Vagina (tissue), 2 donors: ENCODE measurements at regions of chr7 and their contacts with region 1.

Region 1: DNA sequence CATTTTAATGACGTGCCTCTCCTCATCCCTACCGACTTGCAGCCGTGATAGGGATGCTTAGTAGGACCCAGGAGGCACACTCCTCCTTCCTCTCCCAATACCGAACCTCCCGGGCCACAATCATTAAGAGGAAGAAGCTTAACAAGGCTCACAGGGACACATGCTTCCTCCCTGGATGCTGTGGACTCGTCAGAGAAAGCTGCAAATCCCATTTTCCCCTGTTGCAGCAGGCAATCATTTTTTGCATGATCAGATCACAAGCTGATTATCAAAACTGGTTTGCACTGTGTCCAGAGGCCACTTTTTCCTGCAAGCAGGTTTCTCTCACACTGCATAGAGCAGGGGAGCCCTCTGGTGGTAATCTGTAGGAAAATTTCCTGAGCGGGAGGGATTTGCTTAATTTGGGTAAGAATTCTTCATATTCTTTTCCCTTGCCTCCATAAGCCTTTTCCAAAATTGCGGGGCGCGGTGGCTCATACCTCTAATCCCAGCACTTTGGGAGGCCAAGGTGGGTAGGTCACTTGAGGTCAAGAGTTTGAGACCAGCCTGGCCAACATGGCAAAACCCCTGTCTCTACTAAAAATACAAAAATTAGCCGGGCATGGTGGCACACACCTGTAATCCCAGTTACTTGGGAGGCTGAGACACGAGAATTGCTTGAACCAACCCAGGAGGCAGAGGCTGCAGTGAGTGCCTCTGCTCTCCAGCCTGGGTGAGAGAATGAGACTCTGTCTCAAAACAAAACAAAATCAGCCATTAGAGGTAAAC is 16.1 kb upstream of the LAMB4 start:
- DNase-seq: no peak
- H3K4me3 ChIP-seq: no peak overlapping the region
- H3K27ac ChIP-seq: no peak overlapping the region
- H3K4me1 ChIP-seq: peaks cover 4% of the 10 kb centered on the region
- H3K27me3 ChIP-seq: no peaks in the 10 kb centered on the region
- CTCF ChIP-seq: peak; percentile 54 to 90 (median 79)
- POLR2A ChIP-seq: no peak

Region 2: DNA sequence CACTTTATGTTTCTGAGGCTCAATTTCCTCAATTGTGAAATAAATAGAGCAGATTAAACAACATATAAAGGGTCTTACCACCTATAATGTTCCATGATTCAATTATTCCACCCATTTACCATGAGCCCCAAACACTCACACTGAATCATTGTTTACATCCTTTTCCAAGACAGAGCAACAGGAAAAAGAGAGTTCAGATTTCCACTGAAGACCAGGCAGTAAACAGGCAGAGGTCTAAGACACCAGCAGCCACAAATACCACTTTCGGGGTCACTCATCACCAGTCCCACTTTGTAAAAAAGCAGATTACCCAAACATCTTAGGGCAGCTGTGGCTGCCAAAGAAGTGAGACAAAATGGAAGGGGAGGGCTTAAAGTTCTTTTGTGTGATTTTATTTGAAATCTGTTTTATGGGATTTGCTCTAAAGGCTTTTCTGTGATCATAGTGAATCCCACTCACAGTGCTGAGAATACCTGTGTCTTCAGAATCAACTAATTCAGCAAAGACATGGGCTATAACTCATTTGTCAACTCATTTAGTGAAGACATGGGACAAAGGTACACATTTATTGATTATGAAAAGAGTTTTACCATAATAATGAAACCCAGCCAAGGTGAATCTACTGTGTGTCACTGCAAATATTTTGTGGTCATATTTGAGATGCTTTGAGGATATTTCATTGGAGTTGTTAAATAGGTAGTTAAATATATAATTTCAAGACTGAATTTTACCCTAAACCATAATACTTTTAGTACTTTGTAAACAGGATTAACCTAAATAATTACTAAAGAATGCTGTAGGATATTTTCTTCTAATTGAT is 280.1 kb before region 1 on chr7:
- intact Hi-C with region 1: loop called (anchors 5 kb)
- DNase-seq: no peak
- H3K4me3 ChIP-seq: no peak overlapping the region
- H3K27ac ChIP-seq: no peak overlapping the region
- H3K4me1 ChIP-seq: no peaks in the 10 kb centered on the region
- H3K27me3 ChIP-seq: no peaks in the 10 kb centered on the region
- CTCF ChIP-seq: no peak
- POLR2A ChIP-seq: no peak

Region 3: GRCh38 chr7:108002726-108003598 is 143.3 kb before region 1 on chr7 and contains the start of gene LAMB1:
- intact Hi-C with region 1: loop called (anchors 1 kb)
- DNase-seq: peak in 1 of 2 donors; percentile 89
- H3K4me3 ChIP-seq: peak within 1 kb of the TSS; percentile 66 to 72
- H3K27ac ChIP-seq: peak within 1 kb of the TSS; percentile 65
- H3K4me1 ChIP-seq: peaks cover 28% of the 10 kb centered on the region
- H3K27me3 ChIP-seq: no peaks in the 10 kb centered on the region
- CTCF ChIP-seq: no peak
- POLR2A ChIP-seq: peak in 1 of 2 donors; percentile 26
- total RNA-seq, gene LAMB1: 152 TPM